HEK293 (cell line): ENCODE measurements at regions of chr1 and their contacts with region 1.

Region 1: GRCh38 chr1:152047730-152048402 is 11.1 kb upstream of the S100A11 start:
- H3K4me3 ChIP-seq: peak overlapping the region; percentile 17
- H3K27ac ChIP-seq: peak overlapping the region; percentile 80
- H3K4me1 ChIP-seq: peaks cover 8% of the 10 kb centered on the region
- CTCF ChIP-seq: peak; percentile 89

Region 2: GRCh38 chr1:152061952-152062351 is 14.1 kb after region 1 on chr1:
- CTCF ChIA-PET with region 1: interaction called, 11 read pairs
- POLR2A ChIA-PET with region 1: no interaction called
- H3K4me3 ChIP-seq: no peak overlapping the region
- H3K27ac ChIP-seq: no peak overlapping the region
- H3K4me1 ChIP-seq: no peaks in the 10 kb centered on the region
- CTCF ChIP-seq: no peak

Region 3: GRCh38 chr1:152086760-152087159 is 38.9 kb after region 1 on chr1:
- CTCF ChIA-PET with region 1: interaction called, 10 read pairs
- POLR2A ChIA-PET with region 1: no interaction called
- H3K4me3 ChIP-seq: no peak overlapping the region
- H3K27ac ChIP-seq: no peak overlapping the region
- H3K4me1 ChIP-seq: no peaks in the 10 kb centered on the region
- CTCF ChIP-seq: no peak

Region 4: GRCh38 chr1:152127670-152128069 is 79.8 kb after region 1 on chr1:
- CTCF ChIA-PET with region 1: no interaction called
- POLR2A ChIA-PET with region 1: no interaction called
- H3K4me3 ChIP-seq: no peak overlapping the region
- H3K27ac ChIP-seq: no peak overlapping the region
- H3K4me1 ChIP-seq: no peaks in the 10 kb centered on the region
- CTCF ChIP-seq: no peak

Region 5: DNA sequence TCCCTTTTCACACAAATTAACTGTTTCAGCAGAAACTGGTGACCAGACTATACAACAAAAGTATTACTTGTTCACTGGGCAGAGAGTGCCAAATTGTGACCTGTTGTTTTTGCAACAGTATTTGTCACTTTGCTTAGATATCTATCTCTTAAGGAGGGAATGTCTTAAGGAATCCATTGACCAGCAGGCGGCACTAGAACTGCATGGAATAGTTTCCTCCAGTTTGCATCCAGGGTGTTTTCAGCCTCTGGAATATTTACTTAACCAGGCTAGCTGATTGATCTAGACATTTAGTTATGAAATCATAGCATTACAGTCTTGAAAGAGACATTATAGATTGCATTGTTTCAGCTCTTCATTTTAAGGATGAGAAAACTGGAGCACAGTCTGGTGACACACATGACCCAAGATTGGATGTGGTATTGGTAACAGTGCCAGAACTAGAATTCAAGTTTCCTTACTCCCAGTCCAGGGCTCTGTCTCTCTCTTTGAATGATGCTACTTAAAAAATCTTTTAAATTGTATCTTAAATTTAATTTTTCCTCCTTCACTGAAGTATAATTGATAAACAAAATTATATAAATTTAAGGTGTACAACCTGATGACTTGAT is 94.2 kb after region 1 on chr1:
- CTCF ChIA-PET with region 1: interaction called, 13 read pairs
- POLR2A ChIA-PET with region 1: no interaction called
- H3K4me3 ChIP-seq: no peak overlapping the region
- H3K27ac ChIP-seq: no peak overlapping the region
- H3K4me1 ChIP-seq: no peaks in the 10 kb centered on the region
- CTCF ChIP-seq: peak; percentile 62

Region 6: GRCh38 chr1:152189657-152190442 is 142.0 kb after region 1 on chr1:
- CTCF ChIA-PET with region 1: interaction called, 223 read pairs
- POLR2A ChIA-PET with region 1: no interaction called
- H3K4me3 ChIP-seq: peak overlapping the region; percentile 32; the same call in 1 of the 2 replicates
- H3K27ac ChIP-seq: no peak overlapping the region
- H3K4me1 ChIP-seq: no peaks in the 10 kb centered on the region
- CTCF ChIP-seq: peak; percentile 34; the same call in 1 of the 2 replicates